ENCODE measurements at regions of chr2 and their contacts with region 1.

Region 1: DNA sequence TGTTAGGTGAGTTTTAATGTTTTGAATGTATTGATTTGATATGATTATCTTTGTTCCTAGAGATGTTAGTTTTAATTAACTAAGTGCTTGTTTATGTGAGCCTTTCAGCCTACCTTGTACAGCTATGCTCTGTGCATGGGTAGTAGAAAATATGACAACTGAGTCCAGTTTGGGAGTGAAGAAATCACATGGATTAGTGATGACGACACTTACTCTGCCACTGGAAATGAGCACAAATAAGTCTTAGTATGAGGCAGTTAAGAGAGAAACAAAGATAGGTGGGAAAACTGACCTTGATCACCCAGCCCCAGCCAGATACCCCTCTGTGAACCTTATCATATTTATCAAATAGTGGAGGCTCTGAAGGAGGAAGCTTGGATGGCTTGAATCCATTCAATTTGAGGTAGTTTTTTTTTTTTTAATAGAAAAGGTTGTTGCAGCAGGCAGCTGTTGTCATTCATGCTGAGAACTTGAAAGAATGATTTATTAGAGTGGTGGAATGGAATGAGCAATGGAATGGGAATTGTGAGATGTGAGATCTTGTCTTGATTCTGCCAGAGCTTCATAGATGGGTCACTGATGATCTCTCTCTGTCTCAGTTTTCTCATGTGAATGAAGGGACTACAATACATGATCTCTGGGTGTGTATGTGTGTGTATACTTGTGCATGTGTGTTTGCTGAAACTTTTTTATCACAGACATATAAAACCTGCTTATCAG is 96.4 kb downstream of the MAP3K20 start:
- DNase-seq: no peak
- H3K4me3 ChIP-seq: no peak overlapping the region
- H3K27me3 ChIP-seq: no peaks in the 10 kb centered on the region
- CTCF ChIP-seq: no peak

Region 2: GRCh38 chr2:173090276-173090877 is 81.7 kb before region 1 on chr2:
- CTCF ChIA-PET with region 1: no interaction called
- POLR2A ChIA-PET with region 1: no interaction called
- DNase-seq: no peak
- H3K4me3 ChIP-seq: no peak overlapping the region
- H3K27me3 ChIP-seq: no peaks in the 10 kb centered on the region
- CTCF ChIP-seq: no peak

Region 3: DNA sequence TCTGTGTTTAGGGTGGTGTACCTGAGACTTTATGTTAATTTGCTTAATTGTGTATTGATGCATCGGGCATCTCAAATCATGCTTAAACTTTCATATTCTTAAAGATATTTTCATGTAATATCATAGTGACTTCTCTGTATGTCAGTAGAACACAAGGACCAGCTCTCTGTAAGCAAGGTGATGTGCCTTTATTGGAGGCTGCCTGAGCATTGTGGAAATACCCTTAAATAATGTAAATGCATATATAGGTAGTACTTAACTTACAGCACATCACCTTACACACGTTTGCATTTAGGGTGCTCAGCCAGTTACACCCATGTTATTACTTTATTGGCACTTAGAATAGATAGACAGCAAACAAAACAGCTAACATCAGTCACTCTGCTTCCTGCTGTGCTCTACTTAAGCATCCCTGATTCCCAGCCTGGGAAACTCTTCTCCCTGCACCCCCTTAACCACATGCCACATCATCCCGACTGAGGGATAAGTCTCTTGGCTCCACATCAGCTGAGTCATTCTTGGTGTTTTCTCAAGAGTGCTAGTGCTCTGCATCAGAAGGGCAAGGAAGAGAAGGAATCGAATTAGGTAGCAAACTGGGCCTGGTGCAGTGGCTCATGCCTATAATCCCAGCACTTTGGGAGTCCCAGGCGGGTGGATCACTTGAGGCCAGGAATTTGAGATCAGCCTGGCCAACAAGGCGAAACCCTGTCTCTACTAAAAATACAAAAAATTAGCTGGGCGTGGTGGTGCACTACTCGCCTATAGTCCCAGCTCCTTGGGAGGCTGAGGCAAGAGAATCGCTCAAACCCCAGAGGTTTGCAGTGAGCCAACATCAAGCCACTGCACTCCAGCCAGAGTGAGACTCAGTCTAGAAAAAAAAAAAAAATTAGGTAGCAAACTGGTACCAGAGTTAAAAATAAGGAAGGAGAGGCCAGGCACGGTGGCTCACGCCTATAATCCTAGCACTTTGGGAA is 12.2 kb after region 1 on chr2:
- CTCF ChIA-PET with region 1: interaction called, 5 read pairs
- POLR2A ChIA-PET with region 1: interaction called, 11 read pairs
- DNase-seq: peak; percentile 96
- H3K4me3 ChIP-seq: no peak overlapping the region
- H3K27me3 ChIP-seq: no peaks in the 10 kb centered on the region
- CTCF ChIP-seq: no peak

Measured in BJ (cell line).